ENCODE measurements at regions of chr4 and their contacts with region 1.

Region 1: DNA sequence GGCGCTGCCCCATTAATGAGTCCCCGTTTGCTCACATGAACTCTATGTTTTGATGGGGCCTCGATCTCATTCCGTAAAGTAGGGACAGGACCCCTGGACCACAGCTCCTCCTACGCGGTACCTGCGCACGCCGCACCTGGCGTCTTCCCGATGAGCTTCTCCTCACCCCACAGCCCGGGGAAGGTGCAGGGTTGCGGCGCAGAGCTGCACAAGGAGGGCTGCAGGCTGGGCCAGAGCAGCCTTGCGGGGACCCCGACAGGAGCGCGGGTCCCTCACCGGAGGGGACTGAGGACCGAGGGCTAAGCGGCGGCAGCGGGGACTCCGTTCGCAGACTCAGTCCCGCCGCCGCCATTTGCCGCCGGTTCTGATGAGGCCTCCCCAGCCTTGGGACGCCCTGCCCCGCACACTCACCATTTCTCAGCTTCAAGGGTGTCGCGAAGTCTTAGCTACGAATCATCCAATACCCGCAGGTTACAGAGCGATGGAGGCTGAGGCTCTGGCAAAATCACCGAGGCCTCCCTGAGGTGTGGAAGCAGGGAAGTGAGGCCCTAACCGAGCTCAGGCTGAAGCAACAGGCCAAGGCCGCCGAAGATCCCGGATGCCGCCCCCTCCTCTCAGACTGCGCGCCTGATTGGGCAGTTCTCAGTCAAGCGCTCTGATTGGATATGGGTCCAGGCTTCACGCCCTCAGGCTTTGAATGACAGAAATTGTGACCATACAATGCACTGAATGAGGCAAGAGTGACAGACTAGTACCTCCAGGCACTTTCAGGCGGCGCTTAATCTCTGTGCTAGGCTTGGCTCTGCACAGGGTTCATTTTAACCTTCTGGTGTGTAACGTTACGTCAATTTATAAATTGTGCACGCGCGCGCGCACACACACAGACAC is 25.1 kb downstream of the ZNF721 start:
- DNase-seq: peak; percentile 94 to 99 (median 96)

Region 2: DNA sequence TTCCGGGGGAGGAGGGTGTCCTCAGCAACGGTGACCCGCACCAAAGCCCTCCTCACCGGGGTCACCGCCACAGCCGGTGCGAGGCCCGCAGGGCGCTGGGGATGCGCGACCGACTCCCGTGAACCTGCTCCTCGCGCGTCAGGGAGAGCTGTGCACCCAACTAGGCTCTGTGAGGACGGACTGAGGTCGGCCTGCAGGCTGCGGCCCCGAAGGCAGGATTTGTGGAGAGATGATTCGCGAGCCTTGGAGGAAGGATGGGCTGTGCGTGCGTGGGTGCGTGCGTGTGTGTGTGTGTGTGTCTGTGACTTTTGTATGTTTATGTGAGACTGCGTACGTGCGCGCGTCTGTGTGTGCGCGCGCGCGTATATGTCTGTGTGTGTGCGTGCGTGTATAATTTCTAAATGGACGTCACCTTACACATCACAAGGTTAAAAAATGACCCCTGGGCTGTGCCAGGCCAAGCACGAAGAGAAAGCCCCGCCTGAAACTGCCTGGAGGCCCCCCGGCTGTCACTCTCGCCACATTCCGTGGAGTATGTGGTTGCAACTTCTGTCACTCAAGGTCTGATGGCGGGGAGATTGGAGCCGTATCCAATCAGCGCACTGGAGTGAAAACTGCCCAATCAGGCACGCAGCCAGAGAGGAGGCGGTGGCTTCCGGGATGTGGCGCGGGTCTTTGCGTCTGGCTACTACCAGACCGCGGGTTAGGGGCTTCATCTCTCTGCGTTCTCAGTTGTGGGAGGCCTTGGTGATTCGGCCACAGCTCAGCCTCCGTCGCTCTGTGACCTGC is 136.5 kb before region 1 on chr4 and contains the start of gene ZNF141:
- intact Hi-C with region 1: loop called (anchors 10 kb)
- DNase-seq: peak; percentile 93 to 99 (median 97)

Region 3: GRCh38 chr4:532588-533317 is 58.9 kb after region 1 on chr4:
- intact Hi-C with region 1: no loop called
- DNase-seq: peak in 2 of 10 donors; percentile 52 to 65

Region 4: DNA sequence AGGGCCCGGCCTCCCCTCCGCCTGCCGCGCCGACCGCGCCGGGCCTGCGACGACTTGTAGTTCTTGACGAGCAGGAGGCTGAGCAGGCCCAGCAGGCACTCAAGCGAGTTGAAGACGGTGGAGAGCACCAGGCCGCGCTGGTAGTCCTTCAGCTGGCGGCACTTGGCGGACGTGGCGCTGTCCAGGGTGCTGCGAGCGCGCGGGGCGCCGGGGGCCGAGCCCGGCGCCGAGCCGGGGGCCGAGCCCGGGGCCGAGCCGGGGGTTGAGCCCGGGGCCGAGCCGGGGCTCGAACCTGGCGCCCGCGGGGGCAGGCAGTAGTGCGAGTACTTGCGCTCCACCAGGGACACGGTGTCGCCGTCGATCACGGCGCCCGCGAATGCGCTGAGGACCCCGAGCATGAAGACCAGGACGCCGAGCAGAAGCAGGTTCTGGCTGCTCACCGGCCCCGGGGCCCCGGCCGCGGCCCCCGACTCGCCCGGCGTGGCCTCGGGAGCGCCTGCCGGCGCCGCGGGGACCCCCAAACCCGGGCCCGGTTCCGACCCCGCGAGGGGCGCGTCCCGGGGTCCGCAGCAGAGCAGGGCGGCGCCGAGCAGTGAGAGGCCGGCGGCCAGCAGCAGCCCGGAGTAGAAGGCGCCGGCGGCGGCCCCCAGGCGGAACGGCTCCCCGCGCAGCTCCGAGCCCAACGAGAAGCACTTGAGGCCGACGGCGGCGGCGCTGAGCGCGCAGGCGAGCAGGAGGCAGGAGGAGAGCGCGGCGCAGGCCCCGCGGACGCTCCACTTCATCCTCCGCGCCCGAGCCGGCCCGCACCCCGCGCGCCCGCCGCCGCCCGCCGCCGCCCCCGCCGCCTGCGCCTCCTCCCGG is 101.7 kb after region 1 on chr4:
- intact Hi-C with region 1: no loop called
- DNase-seq: peak in 5 of 10 donors; percentile 29 to 91 (median 83)

Region 5: GRCh38 chr4:674172-675035 is 200.6 kb after region 1 on chr4 and contains the starts of genes ATP5ME and MYL5:
- intact Hi-C with region 1: loop called (anchors 10 kb)
- DNase-seq: peak; percentile 91 to 99 (median 95)

Region 6: DNA sequence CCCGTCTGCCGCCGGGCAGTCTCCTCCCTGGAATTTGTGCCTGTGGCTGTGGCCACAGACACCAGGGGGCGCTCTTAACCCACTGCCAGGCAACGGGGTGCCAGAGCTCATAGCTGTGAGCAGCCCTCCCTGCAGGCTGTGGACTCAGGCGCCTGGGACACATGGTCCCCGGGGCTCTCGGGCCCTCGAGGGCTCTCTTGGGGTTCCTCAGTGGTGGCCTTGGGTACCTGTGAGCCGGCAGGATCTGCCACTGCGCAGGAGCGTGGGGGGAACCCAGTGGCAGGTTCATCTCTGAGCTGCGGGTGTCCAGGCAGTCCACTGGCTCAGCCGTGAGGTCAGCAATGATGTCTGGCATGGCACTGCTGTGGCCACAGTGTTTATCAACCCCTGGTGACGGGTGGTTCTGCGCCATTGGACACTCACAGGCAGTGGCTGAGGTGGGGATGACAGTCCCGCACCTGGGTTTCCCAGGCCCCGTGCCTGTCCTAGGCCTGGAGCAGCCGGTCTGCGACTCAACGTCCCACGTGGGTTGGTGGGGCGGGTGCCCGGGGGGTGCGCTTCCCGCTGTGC is 269.0 kb after region 1 on chr4:
- intact Hi-C with region 1: no loop called
- DNase-seq: peak in 8 of 10 donors; percentile 60 to 94 (median 70)

Region 7: DNA sequence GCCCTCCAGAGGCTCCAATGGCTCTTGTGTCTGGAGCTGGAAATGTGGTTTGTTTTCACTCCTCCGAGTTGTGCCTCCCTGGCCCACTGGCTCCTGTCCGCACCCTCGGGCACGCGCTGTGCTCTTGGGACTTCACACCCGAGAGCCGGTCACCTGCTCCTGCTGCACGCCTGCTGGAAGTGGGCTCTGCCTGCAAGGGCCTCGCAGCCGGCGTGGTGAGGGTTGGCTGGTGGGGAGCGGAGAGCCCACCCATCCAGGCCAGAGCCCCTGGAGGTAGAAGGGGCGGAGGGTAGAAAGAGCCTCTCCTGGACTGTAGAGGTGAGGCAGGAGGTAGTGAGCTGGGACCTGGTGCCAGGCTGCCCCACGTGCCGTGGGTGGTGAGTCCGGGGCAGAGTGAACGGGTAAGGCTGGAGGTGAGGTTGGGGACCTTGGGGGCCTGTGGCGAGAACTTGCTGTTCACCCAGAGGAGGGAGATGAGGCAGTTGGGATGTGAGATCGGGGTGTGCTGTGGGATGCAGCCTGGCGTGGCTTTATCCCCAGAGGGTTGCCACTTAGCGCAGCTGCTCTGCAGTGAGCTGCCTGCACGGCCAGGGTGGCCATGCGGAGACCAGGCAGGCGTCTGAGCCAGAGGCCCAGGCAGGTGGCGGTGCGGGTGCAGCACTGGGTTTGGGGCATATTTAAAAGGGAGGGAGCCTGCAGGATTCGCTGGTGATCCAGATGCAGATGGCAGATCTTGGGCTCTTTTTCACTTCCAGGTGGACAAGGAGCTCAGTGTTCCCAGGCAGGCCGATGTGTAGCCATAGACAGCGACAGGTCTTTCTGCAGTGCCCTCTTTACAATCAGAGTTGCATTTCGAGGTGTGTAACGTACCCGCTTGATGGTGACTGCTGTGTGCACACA is 280.7 kb after region 1 on chr4:
- intact Hi-C with region 1: no loop called
- DNase-seq: peak in 3 of 10 donors; percentile 48 to 77 (median 70)

Measured in posterior cingulate gyrus (tissue), 11 donors.